ENCODE measurements at regions of chr6 and their contacts with region 1.

Region 1: GRCh38 chr6:32971581-32972352 is 3.4 kb downstream of the BRD2 start:
- DNase-seq: peak; percentile 99 to 100 (median 100)
- H3K4me3 ChIP-seq: peak overlapping the region; percentile 88
- H3K27ac ChIP-seq: peak overlapping the region; percentile 95 to 98
- H3K4me1 ChIP-seq: peaks cover 7% of the 10 kb centered on the region
- H3K27me3 ChIP-seq: no peaks in the 10 kb centered on the region
- CTCF ChIP-seq: peak in 2 of 3 donors; percentile 15 to 25
- EP300 ChIP-seq: peak; percentile 71
- POLR2A ChIP-seq: peak; percentile 99

Region 2: GRCh38 chr6:32195652-32195901 is 776.2 kb before region 1 on chr6:
- intact Hi-C with region 1: loop called in 1 of 4 experiments (anchors 10 kb)
- DNase-seq: peak; percentile 100
- H3K4me3 ChIP-seq: peak overlapping the region; percentile 83
- H3K27ac ChIP-seq: peak overlapping the region in 1 of 2 donors; percentile 98
- H3K4me1 ChIP-seq: peaks cover 6% of the 10 kb centered on the region
- H3K27me3 ChIP-seq: no peaks in the 10 kb centered on the region
- CTCF ChIP-seq: peak; percentile 72 to 91 (median 73)
- EP300 ChIP-seq: no peak
- POLR2A ChIP-seq: no peak

Region 3: DNA sequence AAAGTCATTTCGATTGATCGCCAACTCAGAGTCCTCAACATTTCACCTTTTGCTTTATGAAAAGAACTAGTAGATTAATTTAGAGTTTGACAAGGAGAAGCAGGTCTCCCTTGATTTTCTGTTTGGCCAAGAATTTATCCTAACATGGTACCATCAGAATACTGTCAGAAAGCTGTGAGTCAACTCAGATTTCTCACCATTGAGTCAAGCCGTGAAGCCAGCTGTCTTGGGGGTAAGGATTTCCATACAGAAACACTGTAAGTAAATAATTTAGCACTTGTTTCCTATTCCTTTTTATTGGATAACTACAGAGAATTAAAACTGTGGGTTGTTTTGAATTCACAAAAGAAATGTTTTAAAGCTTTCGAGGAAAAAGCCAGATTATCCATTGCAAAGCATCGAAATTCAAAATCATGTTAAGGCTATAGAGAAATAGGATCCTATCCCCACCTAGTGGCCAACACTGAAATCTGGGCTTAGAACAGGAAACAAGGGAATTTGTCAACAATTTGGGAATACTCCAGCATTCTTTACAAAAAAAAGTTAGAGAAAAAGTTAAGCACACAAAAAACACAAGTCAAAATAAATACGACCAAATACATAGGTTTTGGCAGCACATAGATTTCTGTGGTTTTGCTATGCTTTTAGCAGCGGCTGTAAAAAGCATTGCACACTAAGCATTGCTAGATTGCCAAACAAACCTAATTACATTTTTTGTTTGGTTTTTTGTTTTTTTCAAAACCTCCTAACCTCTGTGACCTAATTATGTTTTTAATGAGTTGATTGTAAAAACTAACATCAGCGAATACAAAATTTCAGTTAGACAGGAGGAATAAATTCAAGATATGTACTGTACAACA is 176.3 kb after region 1 on chr6:
- intact Hi-C with region 1: no loop called
- DNase-seq: no peak
- H3K4me3 ChIP-seq: no peak overlapping the region
- H3K27ac ChIP-seq: no peak overlapping the region
- H3K4me1 ChIP-seq: no peaks in the 10 kb centered on the region
- H3K27me3 ChIP-seq: no peaks in the 10 kb centered on the region
- CTCF ChIP-seq: peak; percentile 32 to 60 (median 54)
- EP300 ChIP-seq: no peak
- POLR2A ChIP-seq: no peak